ENCODE measurements at regions of chr14 and their contacts with region 1.

Region 1: DNA sequence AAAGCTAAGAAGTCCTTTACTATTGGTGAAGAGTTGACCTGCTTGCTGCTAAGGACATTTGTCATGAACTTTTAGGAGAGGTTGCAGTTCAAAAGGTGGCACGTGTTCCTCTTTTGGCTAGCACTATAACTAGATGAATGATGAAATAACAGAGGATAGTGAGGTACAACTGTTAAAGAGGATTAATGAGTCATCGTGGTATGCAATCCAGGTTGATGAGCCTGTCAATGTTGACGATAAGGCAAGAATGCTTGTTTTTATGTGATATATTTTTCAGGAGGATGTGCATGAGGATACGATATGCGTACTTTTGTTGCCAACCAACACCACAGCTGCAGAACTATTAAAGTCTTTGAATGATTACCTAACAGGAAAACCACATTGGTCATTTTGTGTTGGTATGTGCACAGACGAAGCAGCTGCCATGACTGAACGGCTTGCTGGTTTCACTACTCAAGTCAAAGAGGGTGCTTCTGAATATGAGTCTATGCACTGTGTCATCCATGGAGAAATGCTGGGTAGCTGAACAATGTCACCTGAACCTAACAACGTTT is 10.6 kb downstream of the CEP128 start:
- DNase-seq: peak; percentile 79
- H3K4me3 Mint-ChIP-seq: peak overlapping the region; percentile 33
- H3K27ac Mint-ChIP-seq: peak overlapping the region; percentile 73
- H3K4me1 Mint-ChIP-seq: peaks cover 23% of the 10 kb centered on the region
- H3K27me3 Mint-ChIP-seq: no peaks in the 10 kb centered on the region

Region 2: GRCh38 chr14:80587075-80587724 is 343.7 kb before region 1 on chr14:
- CTCF ChIA-PET with region 1: no interaction called
- intact Hi-C with region 1: loop called (anchors 1 kb)
- DNase-seq: peak; percentile 9
- H3K4me3 Mint-ChIP-seq: no peak overlapping the region
- H3K27ac Mint-ChIP-seq: peak overlapping the region; percentile 39
- H3K4me1 Mint-ChIP-seq: peaks cover 14% of the 10 kb centered on the region
- H3K27me3 Mint-ChIP-seq: no peaks in the 10 kb centered on the region

Region 3: GRCh38 chr14:80941241-80942182 is 10.6 kb after region 1 on chr14 and contains the start of gene CEP128:
- CTCF ChIA-PET with region 1: interaction called, 7 read pairs
- intact Hi-C with region 1: loop called (anchors 1 kb)
- DNase-seq: peak; percentile 90
- H3K4me3 Mint-ChIP-seq: peak within 1 kb of the TSS; percentile 86
- H3K27ac Mint-ChIP-seq: peak within 1 kb of the TSS; percentile 88
- H3K4me1 Mint-ChIP-seq: peaks cover 38% of the 10 kb centered on the region
- H3K27me3 Mint-ChIP-seq: no peaks in the 10 kb centered on the region
- total RNA-seq, gene CEP128: 16.4 to 17.1 TPM

Region 4: GRCh38 chr14:80973931-80974641 is 43.2 kb after region 1 on chr14:
- CTCF ChIA-PET with region 1: no interaction called
- intact Hi-C with region 1: no loop called
- DNase-seq: no peak
- H3K4me3 Mint-ChIP-seq: no peak overlapping the region
- H3K27ac Mint-ChIP-seq: no peak overlapping the region
- H3K4me1 Mint-ChIP-seq: peaks cover 6% of the 10 kb centered on the region
- H3K27me3 Mint-ChIP-seq: peaks cover 7% of the 10 kb centered on the region

Region 5: GRCh38 chr14:81164167-81164774 is 233.4 kb after region 1 on chr14:
- CTCF ChIA-PET with region 1: no interaction called
- intact Hi-C with region 1: loop called (anchors 1 kb)
- DNase-seq: peak; percentile 87
- H3K4me3 Mint-ChIP-seq: no peak overlapping the region
- H3K27ac Mint-ChIP-seq: no peak overlapping the region
- H3K4me1 Mint-ChIP-seq: peaks cover 10% of the 10 kb centered on the region
- H3K27me3 Mint-ChIP-seq: no peaks in the 10 kb centered on the region